Activated CD8-positive, alpha-beta T cell treated with anti-CD3 and anti-CD28 coated beads, Interleukin-2, amount 10 ng/mL, durations not matched to agents 7 days and 5 days (primary cell): ENCODE measurements at regions of chr17 and their contacts with region 1.

Region 1: DNA sequence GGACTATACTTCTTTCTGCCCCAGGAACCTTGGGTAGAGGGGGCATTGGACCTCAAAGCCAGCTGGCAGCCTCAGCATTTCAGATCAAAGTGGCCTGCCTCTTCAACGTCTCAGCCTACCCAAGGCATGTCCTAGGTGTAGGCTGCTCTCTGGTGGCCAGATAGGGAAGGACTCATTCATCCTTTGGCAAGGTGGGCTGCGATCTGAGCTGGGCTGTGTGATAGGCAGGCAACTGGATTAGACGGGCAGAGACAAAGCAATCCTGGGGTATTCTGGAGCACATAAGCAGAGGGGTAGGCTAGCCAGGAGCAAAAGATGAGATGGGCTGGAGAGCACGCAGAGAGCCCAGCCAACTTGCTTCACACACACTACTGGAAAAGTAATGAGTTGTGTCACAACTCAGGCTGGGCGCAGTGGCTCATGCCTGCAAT is 8.8 kb upstream of the NAGLU start:
- DNase-seq: peak; percentile 86
- ATAC-seq: peak; percentile 74
- H3K4me3 Mint-ChIP-seq: no peak overlapping the region
- H3K27ac Mint-ChIP-seq: no peak overlapping the region
- H3K4me1 Mint-ChIP-seq: peaks cover 44% of the 10 kb centered on the region
- H3K27me3 Mint-ChIP-seq: no peaks in the 10 kb centered on the region

Region 2: DNA sequence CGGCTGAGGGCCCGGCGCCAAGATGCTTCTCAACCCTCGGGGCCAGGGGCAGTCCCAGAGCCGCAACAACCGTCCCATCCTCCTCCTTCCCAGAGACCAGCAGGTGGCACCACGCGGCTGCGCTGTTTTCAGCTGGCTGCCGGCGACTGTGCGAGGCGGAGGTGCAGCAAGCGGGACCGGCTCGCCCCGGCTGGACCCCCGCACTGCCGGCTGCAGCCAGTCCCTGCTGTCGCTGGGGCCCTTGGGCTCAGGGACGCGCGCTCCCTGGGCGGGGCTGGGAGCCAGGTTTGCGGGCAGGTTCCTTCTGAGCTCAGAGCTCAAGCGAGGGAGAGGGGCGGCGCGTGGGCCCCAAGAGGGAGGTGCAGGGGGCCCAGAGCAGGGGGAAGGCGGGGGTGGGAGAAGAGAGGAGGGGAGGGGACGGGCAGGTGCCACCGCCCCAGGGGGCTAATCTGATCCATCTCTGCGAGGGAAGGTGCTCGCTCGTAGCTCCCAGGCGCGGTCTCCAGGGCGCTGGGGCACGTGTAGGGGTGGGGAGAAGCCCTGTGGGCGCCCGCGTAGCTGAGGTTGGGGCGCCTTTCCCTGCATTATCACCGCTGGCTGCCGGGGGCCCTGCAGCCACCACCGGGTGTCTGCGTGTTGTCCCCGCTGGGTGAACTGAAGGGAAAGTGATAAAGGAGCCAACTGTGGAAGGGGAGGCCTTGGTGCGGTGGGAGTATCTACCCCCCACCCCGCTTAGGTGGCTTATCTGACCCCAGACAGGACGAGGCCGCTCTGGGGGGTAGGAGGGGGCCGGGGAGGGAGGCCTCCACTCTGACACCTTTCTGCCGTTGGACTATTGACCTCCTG is 214.8 kb before region 1 on chr17:
- CTCF ChIA-PET with region 1: interaction called, 25 read pairs
- POLR2A ChIA-PET with region 1: interaction called, 3 read pairs
- DNase-seq: peak; percentile 85
- ATAC-seq: peak; percentile 77
- H3K4me3 Mint-ChIP-seq: peak overlapping the region; percentile 39
- H3K27ac Mint-ChIP-seq: peak overlapping the region; percentile 67
- H3K4me1 Mint-ChIP-seq: peaks cover 60% of the 10 kb centered on the region
- H3K27me3 Mint-ChIP-seq: no peaks in the 10 kb centered on the region

Region 3: DNA sequence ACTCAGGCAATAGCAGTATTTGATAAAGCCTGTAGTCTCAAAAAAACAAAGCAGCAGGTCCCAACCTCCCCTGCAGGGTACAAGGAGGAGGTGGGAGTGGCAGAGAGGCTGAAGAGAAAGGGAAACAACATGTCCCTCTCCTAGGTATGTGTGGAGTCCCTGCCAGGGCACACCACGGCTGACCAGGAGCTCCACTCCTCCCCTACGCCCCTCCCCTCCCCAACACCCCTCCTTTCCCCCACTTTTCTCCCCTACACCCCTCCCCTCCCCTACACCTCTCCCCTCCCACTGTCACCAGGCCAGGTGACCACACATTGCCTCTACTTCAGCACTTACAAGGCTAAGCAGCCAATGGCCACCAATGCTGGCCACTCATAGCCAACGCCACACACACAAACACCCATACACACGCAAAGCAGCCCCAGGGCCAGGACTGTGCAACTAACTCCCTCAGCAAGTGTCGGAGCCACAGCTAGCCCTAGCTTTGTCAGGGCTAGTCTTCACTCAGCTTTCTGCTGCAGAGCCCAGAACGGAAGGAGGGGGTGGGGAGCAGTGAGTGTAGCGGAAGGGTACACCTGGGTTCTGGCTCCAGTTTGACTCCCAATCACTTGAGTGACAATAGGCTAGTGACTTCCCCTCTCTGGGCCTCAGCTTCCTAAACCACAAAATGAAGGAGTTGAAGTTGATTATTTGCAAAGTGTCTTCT is 112.4 kb before region 1 on chr17:
- CTCF ChIA-PET with region 1: interaction called, 12 read pairs
- POLR2A ChIA-PET with region 1: no interaction called
- DNase-seq: peak; percentile 62
- ATAC-seq: peak; percentile 69
- H3K4me3 Mint-ChIP-seq: no peak overlapping the region
- H3K27ac Mint-ChIP-seq: peak overlapping the region; percentile 53
- H3K4me1 Mint-ChIP-seq: peaks cover 12% of the 10 kb centered on the region
- H3K27me3 Mint-ChIP-seq: peaks cover 10% of the 10 kb centered on the region

Region 4: GRCh38 chr17:42428141-42428944 is 98.9 kb before region 1 on chr17:
- CTCF ChIA-PET with region 1: interaction called, 12 read pairs
- POLR2A ChIA-PET with region 1: no interaction called
- DNase-seq: peak; percentile 58
- ATAC-seq: peak; percentile 64
- H3K4me3 Mint-ChIP-seq: no peak overlapping the region
- H3K27ac Mint-ChIP-seq: no peak overlapping the region
- H3K4me1 Mint-ChIP-seq: peaks cover under 1% of the 10 kb centered on the region
- H3K27me3 Mint-ChIP-seq: peaks cover 31% of the 10 kb centered on the region

Region 5: GRCh38 chr17:42441371-42442195 is 85.7 kb before region 1 on chr17:
- CTCF ChIA-PET with region 1: interaction called, 10 read pairs
- POLR2A ChIA-PET with region 1: no interaction called
- DNase-seq: no peak
- ATAC-seq: no peak
- H3K4me3 Mint-ChIP-seq: no peak overlapping the region
- H3K27ac Mint-ChIP-seq: no peak overlapping the region
- H3K4me1 Mint-ChIP-seq: peaks cover 2% of the 10 kb centered on the region
- H3K27me3 Mint-ChIP-seq: peaks cover 9% of the 10 kb centered on the region

Region 6: GRCh38 chr17:42819944-42820535 is 292.8 kb after region 1 on chr17:
- CTCF ChIA-PET with region 1: no interaction called
- POLR2A ChIA-PET with region 1: no interaction called
- DNase-seq: peak; percentile 79
- ATAC-seq: no peak
- H3K4me3 Mint-ChIP-seq: no peak overlapping the region
- H3K27ac Mint-ChIP-seq: peak overlapping the region; percentile 3
- H3K4me1 Mint-ChIP-seq: peaks cover 28% of the 10 kb centered on the region
- H3K27me3 Mint-ChIP-seq: peaks cover under 1% of the 10 kb centered on the region